Activated CD4-positive, alpha-beta T cell treated with anti-CD3 and anti-CD28 coated beads for 36 hours (primary cell): ENCODE measurements at regions of chr2 and their contacts with region 1.

Region 1: DNA sequence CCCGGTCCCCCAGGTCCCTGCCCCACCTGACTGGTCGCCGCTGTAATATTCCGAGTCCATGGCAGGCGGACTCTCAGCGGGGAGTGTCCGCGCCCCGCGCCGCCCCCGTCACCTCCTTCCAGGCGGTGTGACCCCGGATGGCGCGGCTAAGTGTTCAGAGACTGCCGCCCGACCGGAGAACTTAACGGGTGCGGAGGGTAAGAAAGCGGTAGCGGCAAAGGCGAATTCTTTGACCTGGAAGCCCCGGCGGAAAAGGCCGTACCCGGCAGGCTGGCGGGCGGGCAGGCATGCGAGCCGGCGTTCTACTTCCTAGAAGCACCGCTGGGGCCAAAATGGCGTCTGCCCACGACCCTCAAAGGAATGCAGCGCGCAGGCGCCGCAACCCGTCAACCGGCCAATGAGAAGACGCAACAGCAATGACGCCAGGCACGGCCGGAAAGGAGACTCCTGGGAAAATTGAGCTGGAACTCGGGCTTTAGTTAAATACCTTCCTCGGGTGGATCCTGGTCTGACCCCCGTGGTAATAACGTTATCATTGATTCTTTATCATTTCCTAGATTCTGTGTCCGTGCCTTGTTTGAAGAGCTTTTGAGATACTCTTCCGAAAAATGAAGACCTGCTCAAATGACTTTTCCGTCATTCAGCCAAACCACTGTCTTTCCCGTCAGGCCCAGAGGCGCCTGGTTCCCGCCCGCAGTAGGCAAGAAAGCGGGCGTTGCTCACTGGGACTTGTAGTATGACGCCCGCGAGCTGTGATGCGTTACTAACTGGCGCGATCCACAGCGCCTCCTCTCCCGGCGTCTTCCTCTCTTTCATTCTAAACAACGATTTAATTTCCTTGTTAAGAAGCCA is at the start of gene IWS1:
- DNase-seq: peak; percentile 96
- ATAC-seq: peak; percentile 94
- H3K4me3 Mint-ChIP-seq: peak within 1 kb of the TSS; percentile 98
- H3K27ac Mint-ChIP-seq: peak within 1 kb of the TSS; percentile 98
- H3K4me1 Mint-ChIP-seq: peaks cover 29% of the 10 kb centered on the region
- H3K27me3 Mint-ChIP-seq: no peaks in the 10 kb centered on the region
- total RNA-seq, gene IWS1: 49.5 to 55.0 TPM

Region 2: DNA sequence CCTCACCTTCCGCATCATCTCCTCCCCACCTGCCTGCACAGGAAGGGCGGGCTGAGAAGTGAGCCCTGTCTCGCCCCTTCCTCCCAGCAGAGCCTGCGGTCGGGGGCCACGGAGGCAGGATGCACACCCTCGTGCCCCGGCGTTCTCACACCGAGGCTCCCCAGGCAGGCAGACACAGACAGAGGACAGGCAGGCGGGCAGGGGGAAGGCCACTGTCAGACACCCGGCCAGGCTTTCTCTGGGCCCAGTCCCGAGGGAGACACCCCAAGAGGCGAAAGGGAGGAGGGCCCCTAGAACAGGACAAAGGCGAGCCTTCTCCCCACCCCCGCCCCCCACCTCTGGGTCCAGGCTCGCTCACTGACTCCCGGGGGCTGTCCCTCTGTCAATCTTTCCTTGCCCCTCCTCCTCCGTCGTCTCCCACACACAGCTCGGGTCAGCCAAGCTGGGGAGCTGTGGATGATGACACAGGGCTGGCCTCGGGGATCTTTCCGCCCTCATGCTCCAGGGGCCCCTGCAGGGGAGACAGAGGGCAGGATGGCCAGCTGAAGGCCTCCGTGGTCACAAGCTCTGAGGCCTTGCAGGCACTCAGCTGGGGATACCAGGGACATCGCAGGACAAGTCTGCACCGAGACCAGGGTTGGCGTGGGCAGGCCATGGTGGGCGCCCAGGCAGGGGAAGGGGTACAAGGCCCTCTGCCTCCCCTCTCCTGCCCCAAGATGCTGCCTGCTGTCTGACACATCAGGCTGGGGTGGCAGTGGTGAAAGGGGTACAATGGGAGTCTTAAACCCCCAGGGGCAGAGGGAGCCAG is 444.3 kb before region 1 on chr2:
- CTCF ChIA-PET with region 1: no interaction called
- POLR2A ChIA-PET with region 1: no interaction called
- intact Hi-C with region 1: loop called in 1 of 2 experiments (anchors 5 kb)
- DNase-seq: peak; percentile 87
- ATAC-seq: peak; percentile 50
- H3K4me3 Mint-ChIP-seq: peak overlapping the region; percentile 82
- H3K27ac Mint-ChIP-seq: peak overlapping the region; percentile 91
- H3K4me1 Mint-ChIP-seq: peaks cover 75% of the 10 kb centered on the region
- H3K27me3 Mint-ChIP-seq: no peaks in the 10 kb centered on the region

Region 3: DNA sequence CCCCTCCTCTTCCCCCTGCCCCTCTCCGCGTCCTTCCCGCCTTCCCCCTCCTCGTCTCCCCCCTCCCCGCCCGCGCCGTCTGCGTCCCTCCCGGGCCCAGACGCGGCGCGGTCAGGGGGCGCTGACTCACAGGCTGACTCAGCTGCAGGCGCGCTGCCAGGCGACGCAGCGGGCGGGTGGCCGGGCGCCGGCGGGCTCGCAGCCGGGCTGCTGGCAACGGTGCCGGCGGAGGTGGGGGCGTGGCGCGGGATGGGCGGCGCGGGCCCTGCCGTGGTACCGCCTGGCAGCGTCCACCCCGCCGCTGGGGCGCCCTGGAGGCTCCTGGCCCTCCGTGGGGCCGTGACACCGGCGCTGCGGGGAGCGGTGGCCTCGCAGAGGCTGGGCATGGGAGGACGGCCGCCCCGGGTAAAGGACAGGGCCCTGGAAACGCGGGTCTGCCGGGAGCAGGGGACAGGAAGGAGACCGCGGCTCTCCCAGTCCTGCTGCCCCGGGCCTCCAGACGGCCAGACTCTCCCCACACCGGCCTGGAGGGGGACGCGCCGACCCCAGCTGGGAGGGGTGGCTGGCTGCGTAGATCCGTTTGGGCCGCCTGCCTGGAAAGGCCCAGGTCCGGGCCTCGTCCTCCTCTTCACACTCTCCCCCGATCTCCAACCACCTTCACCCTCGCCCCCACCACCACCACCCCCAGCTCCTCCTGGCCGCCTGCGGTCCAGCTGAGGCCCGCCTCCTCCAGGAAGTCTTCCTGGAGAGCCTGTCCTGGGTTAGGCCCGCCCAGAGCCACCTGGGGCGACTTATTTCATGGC is 118.2 kb before region 1 on chr2:
- CTCF ChIA-PET with region 1: no interaction called
- POLR2A ChIA-PET with region 1: no interaction called
- intact Hi-C with region 1: loop called (anchors 1 kb)
- DNase-seq: peak; percentile 94
- ATAC-seq: peak; percentile 87
- H3K4me3 Mint-ChIP-seq: no peak overlapping the region
- H3K27ac Mint-ChIP-seq: peak overlapping the region; percentile 67
- H3K4me1 Mint-ChIP-seq: peaks cover 32% of the 10 kb centered on the region
- H3K27me3 Mint-ChIP-seq: peaks cover 6% of the 10 kb centered on the region

Region 4: GRCh38 chr2:127640082-127641072 is 114.0 kb after region 1 on chr2:
- CTCF ChIA-PET with region 1: interaction called, 3 read pairs
- POLR2A ChIA-PET with region 1: interaction called, 3 read pairs
- intact Hi-C with region 1: loop called (anchors 2 to 5 kb)
- DNase-seq: peak; percentile 72
- ATAC-seq: peak; percentile 47
- H3K4me3 Mint-ChIP-seq: peak overlapping the region; percentile 63
- H3K27ac Mint-ChIP-seq: peak overlapping the region; percentile 67
- H3K4me1 Mint-ChIP-seq: peaks cover 59% of the 10 kb centered on the region
- H3K27me3 Mint-ChIP-seq: no peaks in the 10 kb centered on the region

Region 5: DNA sequence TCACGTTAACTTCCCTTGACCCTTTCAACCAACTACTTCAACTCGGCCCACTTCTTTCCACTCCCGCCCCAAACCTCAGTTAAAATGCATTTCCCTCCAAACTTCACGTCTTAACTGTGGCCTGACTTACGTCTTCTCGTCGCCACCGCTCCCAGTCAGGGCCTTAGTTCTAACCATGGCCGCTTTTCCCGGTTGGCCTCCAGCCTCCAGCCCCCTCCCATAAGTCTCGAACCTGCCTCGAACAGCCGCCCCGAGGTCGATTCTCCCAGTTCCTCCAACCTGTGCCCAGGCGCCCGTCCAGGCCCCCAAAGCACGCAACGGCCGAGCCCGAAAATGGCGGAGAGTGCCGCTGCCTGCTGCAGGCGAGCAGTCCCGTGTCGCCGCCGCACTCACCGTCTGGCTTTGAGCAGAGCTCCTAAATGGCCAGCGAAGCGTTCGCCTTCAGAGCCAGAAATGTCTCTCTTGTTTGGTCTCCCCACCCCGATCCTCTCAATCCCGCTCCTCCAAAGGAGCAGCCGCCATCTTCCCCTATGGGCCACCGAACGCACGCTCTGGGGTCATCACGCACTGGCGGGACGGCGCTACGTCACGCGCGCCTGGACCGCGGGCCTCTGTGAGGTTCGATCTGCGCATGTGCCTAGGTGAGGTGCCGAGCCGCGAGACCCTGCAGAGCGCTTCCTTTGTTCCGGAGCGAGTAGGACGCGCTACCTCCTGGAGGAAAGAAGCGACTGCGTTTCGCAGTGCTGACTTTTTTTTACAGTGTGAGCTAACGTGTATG is 284.4 kb after region 1 on chr2 and contains the start of gene WDR33:
- CTCF ChIA-PET with region 1: no interaction called
- POLR2A ChIA-PET with region 1: no interaction called
- intact Hi-C with region 1: loop called (anchors 1 to 2 kb)
- DNase-seq: peak; percentile 97
- ATAC-seq: peak; percentile 99
- H3K4me3 Mint-ChIP-seq: peak within 1 kb of the TSS; percentile 98
- H3K27ac Mint-ChIP-seq: peak within 1 kb of the TSS; percentile 99
- H3K4me1 Mint-ChIP-seq: peaks cover 42% of the 10 kb centered on the region
- H3K27me3 Mint-ChIP-seq: no peaks in the 10 kb centered on the region
- total RNA-seq, gene WDR33: 58.6 to 76.3 TPM

Region 6: DNA sequence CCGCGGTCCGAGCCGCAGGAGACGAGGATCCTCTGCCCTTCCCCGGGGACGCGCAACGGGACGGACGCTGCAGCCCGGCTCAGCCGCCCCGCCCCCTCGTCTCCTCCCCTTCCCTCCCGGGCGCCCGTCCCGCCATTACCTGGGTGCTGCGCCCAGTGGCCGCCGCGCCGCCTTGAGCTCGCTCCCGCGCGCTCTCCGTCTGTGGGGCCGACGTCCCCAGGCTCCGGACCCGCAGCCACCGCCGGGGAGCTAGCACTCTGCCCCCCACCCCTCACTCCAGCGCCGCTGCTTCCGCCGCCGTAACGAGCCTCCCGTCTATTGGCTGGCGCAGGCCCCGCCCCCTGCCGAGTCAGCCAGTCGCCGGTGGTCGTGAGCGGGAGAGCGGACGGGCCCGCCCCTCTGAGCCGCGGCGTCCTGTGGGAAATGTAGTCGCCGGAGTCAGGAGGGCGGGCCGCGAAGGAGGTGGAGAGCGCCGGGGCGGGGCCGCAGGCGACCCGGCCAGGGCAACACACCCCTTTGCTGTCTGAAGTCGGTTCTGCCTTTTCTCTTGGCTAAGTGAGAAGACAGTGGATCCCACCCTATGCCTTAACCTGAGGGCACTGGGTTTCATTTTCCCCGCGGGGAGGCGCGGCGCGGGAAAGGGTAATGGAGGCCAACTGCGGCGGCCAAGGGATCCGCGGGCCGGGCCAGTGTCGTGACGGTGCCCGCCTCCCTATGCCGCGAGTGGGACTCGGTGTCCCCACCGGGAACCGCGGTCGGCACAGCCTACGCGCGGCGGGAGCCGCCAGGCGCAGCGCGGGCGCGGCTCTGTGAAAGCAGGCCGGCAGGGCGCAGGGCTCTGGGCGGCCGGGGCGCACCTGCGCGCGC is 501.7 kb after region 1 on chr2 and contains the start of gene SAP130:
- CTCF ChIA-PET with region 1: no interaction called
- POLR2A ChIA-PET with region 1: interaction called, 3 read pairs
- intact Hi-C with region 1: loop called in 1 of 2 experiments (anchors 1 kb)
- DNase-seq: peak; percentile 99
- ATAC-seq: peak; percentile 83
- H3K4me3 Mint-ChIP-seq: peak within 1 kb of the TSS; percentile 93
- H3K27ac Mint-ChIP-seq: peak within 1 kb of the TSS; percentile 70
- H3K4me1 Mint-ChIP-seq: peaks cover 13% of the 10 kb centered on the region
- H3K27me3 Mint-ChIP-seq: no peaks in the 10 kb centered on the region
- total RNA-seq, gene SAP130: 28.2 to 35.8 TPM